HCT116 (cell line): ENCODE measurements at regions of chr1 and their contacts with region 1.

Region 1: DNA sequence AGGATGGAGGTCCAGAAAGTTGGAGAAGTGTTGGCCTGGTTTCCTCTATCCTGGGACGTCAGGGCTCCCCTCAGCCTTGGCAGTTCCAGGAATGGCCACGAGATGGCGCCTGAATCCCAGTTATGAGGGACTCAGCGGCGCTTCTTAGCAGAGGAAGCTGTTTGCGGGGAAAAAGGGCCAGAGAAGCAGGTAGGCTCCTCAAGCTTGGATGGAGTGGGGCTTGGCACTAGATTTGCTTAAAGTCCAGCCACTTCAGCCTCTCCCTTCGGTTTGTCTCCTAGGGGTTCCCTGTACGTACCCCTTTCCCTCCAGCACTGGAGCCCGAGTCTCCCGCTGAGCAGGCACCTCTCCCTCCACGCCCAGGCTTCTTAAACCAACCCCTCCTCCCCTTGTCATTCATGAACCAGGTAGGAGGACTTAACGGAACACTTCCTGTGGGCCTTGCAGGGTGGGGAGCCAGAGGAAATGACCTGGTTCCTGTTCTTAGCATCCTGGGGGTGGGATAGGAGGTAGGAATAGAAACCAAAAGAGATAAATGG is 32.0 kb upstream of the TENT5B start:
- DNase-seq: peak; percentile 64
- ATAC-seq: peak; percentile 88
- H3K4me3 ChIP-seq: peak overlapping the region; percentile 37 to 39
- H3K27ac ChIP-seq: no peak overlapping the region
- H3K4me1 ChIP-seq: peaks cover 9 to 19% of the 10 kb centered on the region in 2 experiments; a peak in 3 of 4 replicates
- H3K27me3 ChIP-seq: no peaks in the 10 kb centered on the region
- CTCF ChIP-seq: peak; percentile 95 to 98 (median 97)
- POLR2A ChIP-seq: no peak
- RAD21 ChIP-seq: peak; percentile 99

Region 2: GRCh38 chr1:26965213-26965612 is 79.5 kb before region 1 on chr1:
- CTCF ChIA-PET with region 1: interaction called, 6 read pairs
- POLR2A ChIA-PET with region 1: no interaction called
- RAD21 ChIA-PET with region 1: interaction called in 1 of 2 experiments, 5 read pairs
- intact Hi-C with region 1: loop called (anchors 5 kb)
- DNase-seq: no peak
- ATAC-seq: no peak
- H3K4me3 ChIP-seq: no peak overlapping the region
- H3K27ac ChIP-seq: no peak overlapping the region
- H3K4me1 ChIP-seq: peaks cover 0 to 41% of the 10 kb centered on the region in 2 experiments; a peak in 2 of 4 replicates
- H3K27me3 ChIP-seq: no peaks in the 10 kb centered on the region
- CTCF ChIP-seq: no peak
- POLR2A ChIP-seq: no peak
- RAD21 ChIP-seq: no peak

Region 3: DNA sequence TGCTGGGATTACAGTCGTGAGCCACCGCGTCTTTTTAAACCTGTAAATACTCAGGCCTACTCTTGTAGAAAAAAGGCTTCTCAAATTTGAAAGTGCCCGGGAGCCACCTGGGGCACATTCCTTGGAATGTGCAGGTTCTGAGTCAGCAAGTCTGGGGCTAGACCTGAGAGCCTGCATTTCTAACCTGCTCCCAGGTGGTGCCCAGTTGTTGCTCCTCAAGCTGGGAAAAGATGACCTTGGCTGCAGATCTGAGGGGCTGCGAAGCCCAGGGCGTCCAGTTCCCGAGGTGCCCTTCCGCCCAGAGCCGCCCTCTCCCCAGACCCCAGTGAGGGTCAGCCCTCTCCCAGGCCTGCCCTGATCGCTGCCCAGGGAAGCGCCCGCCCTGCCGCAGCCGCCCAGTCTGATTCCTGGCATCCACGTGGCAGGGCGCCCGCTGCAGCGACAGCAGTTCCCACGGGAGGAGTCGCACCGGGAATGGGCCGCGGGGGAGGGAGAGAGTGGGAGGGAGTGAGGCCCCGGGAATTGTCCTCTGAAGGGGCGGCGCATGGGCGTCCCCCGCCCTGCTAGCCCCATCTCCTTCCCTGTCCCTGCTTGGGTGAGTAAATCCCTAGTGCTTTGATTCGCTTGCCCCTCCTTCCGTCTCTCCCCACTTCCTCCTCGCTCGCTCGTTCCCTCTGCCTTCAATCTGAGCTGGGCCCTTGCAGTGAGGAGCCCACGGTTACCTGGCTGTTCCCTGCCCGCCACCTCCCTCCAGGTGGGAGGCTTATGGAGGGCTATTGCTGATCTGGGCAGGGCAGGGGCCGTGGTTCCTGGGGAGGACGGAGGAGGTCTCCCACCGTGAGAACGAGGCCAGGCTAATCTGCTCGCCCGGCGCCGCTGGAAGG is 13.2 kb before region 1 on chr1:
- CTCF ChIA-PET with region 1: interaction called, 45 read pairs
- POLR2A ChIA-PET with region 1: interaction called, 4 read pairs
- RAD21 ChIA-PET with region 1: no interaction called
- intact Hi-C with region 1: no loop called
- DNase-seq: peak; percentile 67
- ATAC-seq: peak; percentile 79
- H3K4me3 ChIP-seq: peak overlapping the region; percentile 37 to 54
- H3K27ac ChIP-seq: peak overlapping the region; percentile 86
- H3K4me1 ChIP-seq: peaks cover 35 to 46% of the 10 kb centered on the region in 2 experiments
- H3K27me3 ChIP-seq: no peaks in the 10 kb centered on the region
- CTCF ChIP-seq: no peak
- POLR2A ChIP-seq: no peak
- RAD21 ChIP-seq: no peak; the same call in 1 of the 2 replicates

Region 4: GRCh38 chr1:27071049-27071416 is 26.4 kb after region 1 on chr1:
- CTCF ChIA-PET with region 1: interaction called, 13 read pairs
- POLR2A ChIA-PET with region 1: no interaction called
- RAD21 ChIA-PET with region 1: no interaction called
- intact Hi-C with region 1: no loop called
- DNase-seq: no peak
- ATAC-seq: no peak
- H3K4me3 ChIP-seq: no peak overlapping the region
- H3K27ac ChIP-seq: no peak overlapping the region
- H3K4me1 ChIP-seq: peaks cover 8 to 12% of the 10 kb centered on the region in 2 experiments
- H3K27me3 ChIP-seq: no peaks in the 10 kb centered on the region
- CTCF ChIP-seq: no peak
- POLR2A ChIP-seq: no peak
- RAD21 ChIP-seq: no peak

Region 5: GRCh38 chr1:27284425-27285273 is 240.0 kb after region 1 on chr1:
- CTCF ChIA-PET with region 1: interaction called, 16 read pairs
- POLR2A ChIA-PET with region 1: no interaction called
- RAD21 ChIA-PET with region 1: no interaction called
- intact Hi-C with region 1: loop called (anchors 1 kb)
- DNase-seq: peak; percentile 45
- ATAC-seq: peak; percentile 98
- H3K4me3 ChIP-seq: no peak overlapping the region
- H3K27ac ChIP-seq: no peak overlapping the region
- H3K4me1 ChIP-seq: no peaks in the 10 kb centered on the region
- H3K27me3 ChIP-seq: no peaks in the 10 kb centered on the region
- CTCF ChIP-seq: peak; percentile 71 to 87 (median 85)
- POLR2A ChIP-seq: no peak
- RAD21 ChIP-seq: peak; percentile 83

Region 6: GRCh38 chr1:27603681-27604578 is 559.2 kb after region 1 on chr1 and contains the start of gene AHDC1:
- CTCF ChIA-PET with region 1: interaction called, 5 read pairs
- POLR2A ChIA-PET with region 1: no interaction called
- RAD21 ChIA-PET with region 1: no interaction called
- intact Hi-C with region 1: loop called (anchors 10 kb)
- DNase-seq: peak; percentile 65
- ATAC-seq: peak; percentile 74
- H3K4me3 ChIP-seq: peak within 1 kb of the TSS; percentile 85 to 95
- H3K27ac ChIP-seq: peak within 1 kb of the TSS; percentile 68
- H3K4me1 ChIP-seq: peaks cover 40 to 70% of the 10 kb centered on the region in 2 experiments
- H3K27me3 ChIP-seq: no peaks in the 10 kb centered on the region
- CTCF ChIP-seq: no peak
- POLR2A ChIP-seq: peak; percentile 34
- RAD21 ChIP-seq: no peak
- total RNA-seq, gene AHDC1: 33.7 TPM